ENCODE measurements at regions of chr10 and their contacts with region 1.

Region 1: GRCh38 chr10:71608819-71609768 is 110.5 kb downstream of the C10orf105 start:
- DNase-seq: peak; percentile 48
- H3K27ac ChIP-seq: no peak overlapping the region
- CTCF ChIP-seq: peak; percentile 72

Region 2: GRCh38 chr10:71623098-71623985 is 14.2 kb after region 1 on chr10:
- CTCF ChIA-PET with region 1: interaction called, 12 read pairs
- POLR2A ChIA-PET with region 1: no interaction called
- DNase-seq: peak; percentile 40
- H3K27ac ChIP-seq: no peak overlapping the region
- CTCF ChIP-seq: no peak

Region 3: GRCh38 chr10:71636588-71636987 is 27.5 kb after region 1 on chr10:
- CTCF ChIA-PET with region 1: interaction called, 12 read pairs
- POLR2A ChIA-PET with region 1: no interaction called
- DNase-seq: no peak
- H3K27ac ChIP-seq: no peak overlapping the region
- CTCF ChIP-seq: no peak

Measured in RWPE1 (cell line).